ENCODE measurements at regions of chr4 and their contacts with region 1.

Region 1: GRCh38 chr4:168841000-168841671 is 168.9 kb downstream of the CBR4 start:
- DNase-seq: no peak
- H3K4me3 ChIP-seq: peak overlapping the region in 1 of 2 donors; percentile 90
- H3K27ac ChIP-seq: peak overlapping the region; percentile 97 to 99
- H3K4me1 ChIP-seq: peaks cover 39 to 80% of the 10 kb centered on the region in 2 donors
- H3K27me3 ChIP-seq: no peaks in the 10 kb centered on the region
- CTCF ChIP-seq: no peak

Region 2: DNA sequence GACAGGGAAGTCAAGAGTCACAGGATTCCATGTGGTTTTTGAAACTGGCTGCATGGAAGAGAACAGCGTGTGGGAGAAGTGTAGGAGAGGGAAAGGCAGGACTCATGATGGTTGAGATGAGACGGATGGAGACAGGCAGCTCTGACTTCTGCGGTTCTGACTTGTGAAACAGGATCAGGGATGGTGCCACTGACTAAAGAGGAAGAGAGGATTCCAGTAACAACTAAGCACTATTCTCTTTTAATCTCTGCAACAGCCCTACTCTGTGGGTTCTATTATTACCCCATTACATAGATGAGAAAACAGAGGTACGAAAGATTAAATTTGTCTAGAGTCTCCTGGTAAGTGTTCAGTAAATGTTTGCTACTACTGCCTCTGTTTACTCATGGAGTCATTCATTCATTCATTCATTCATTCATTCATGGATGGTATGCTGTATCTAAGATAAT is 12.7 kb after region 1 on chr4:
- intact Hi-C with region 1: loop called (anchors 2 kb)
- DNase-seq: no peak
- H3K4me3 ChIP-seq: no peak overlapping the region
- H3K27ac ChIP-seq: peak overlapping the region; percentile 91 to 99
- H3K4me1 ChIP-seq: peaks cover 10 to 92% of the 10 kb centered on the region in 2 donors
- H3K27me3 ChIP-seq: no peaks in the 10 kb centered on the region
- CTCF ChIP-seq: no peak

Region 3: DNA sequence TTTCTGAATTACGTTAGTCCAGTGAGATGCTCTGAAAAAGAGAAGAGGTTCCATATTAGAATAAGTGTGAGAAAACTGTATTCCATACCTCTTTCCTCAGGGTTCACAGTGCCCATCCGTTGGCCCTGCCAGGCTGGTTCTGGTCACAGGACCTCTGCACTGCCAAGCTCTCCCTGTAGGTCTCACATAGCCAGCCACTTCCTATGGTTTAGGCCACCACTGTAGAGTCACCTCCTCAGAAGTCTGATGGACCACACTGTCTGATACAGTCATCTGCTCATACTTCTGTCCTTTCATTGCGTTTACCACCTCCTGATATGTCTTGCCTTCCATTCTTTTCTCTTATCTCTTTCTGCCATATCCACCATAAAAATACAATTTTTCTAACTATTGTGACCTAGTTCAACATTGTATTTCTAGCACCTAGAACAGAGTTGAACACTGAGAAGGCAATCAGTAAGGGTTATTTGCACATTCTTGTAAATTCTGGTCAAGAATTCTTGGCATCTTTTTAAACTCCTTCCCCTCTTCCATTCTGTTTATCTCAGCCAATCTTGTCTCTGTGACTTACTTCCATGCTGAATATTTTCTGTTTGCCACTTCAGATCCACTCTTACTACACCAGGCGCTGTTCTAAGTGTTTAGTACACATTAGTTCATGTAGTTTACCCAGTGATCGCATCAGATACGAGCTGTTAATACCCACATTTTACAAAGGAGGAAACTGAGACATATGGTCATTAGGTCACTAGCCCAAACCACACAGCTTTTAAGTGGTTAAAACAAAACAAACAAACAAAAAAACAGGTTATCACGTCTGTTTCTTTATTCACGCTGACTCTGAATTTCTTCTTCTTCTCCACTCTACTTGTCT is 43.4 kb after region 1 on chr4:
- intact Hi-C with region 1: loop called (anchors 2 kb)
- DNase-seq: no peak
- H3K4me3 ChIP-seq: peak overlapping the region in 1 of 2 donors; percentile 12
- H3K27ac ChIP-seq: peak overlapping the region; percentile 41 to 46
- H3K4me1 ChIP-seq: peaks cover 3 to 59% of the 10 kb centered on the region in 2 donors
- H3K27me3 ChIP-seq: no peaks in the 10 kb centered on the region
- CTCF ChIP-seq: no peak

Region 4: GRCh38 chr4:169015186-169015623 is 174.1 kb after region 1 on chr4:
- intact Hi-C with region 1: no loop called
- DNase-seq: no peak
- H3K4me3 ChIP-seq: no peak overlapping the region
- H3K27ac ChIP-seq: peak overlapping the region; percentile 54 to 62
- H3K4me1 ChIP-seq: no peaks in the 10 kb centered on the region
- H3K27me3 ChIP-seq: no peaks in the 10 kb centered on the region
- CTCF ChIP-seq: no peak